Mammary epithelial cell (primary cell): ENCODE measurements at regions of chr3 and their contacts with region 1.

Region 1: DNA sequence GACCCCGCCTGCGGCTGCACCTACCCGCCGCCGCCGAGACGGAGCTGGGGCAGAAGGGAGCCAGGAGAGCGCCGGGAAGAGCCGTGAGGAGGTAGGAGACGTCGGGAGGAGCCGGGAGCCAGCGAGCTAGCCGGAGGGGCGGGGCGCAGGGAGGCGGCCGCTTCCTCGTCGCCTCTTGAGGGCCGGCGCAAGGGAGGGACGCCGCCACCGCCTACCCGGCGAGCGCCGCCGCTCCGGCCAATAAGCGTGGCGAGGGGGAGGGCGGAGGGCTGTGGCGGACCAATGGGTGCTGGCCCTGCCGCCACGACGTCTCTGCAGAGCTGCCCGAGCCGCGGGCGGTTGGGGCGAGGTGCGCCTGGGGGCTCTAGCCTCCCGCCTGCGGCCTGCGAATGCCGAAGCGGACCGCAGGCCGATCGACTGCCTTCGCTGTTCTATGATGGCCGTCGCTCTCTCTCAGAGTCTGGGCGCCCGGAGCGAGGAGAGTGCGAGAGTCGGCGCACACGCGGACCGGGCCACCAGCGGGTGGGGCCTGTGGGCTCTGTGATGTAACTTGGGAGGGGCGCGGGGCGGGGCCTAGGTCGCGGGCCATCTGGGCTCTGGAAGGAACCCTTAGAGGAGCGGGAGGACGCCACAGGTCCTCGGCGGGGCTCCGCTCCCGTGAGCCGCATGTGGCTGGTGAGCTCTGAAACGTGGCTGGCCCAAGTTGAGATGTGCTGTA is 72.7 kb upstream of the MAP4 start:
- DNase-seq: peak; percentile 98
- H3K4me3 ChIP-seq: peak overlapping the region; percentile 83 to 92 (median 90)
- H3K27ac ChIP-seq: peak overlapping the region; percentile 93
- H3K4me1 ChIP-seq: peaks cover 17% of the 10 kb centered on the region
- H3K27me3 ChIP-seq: no peaks in the 10 kb centered on the region
- CTCF ChIP-seq: peak in 1 of 2 donors; percentile 29

Region 2: DNA sequence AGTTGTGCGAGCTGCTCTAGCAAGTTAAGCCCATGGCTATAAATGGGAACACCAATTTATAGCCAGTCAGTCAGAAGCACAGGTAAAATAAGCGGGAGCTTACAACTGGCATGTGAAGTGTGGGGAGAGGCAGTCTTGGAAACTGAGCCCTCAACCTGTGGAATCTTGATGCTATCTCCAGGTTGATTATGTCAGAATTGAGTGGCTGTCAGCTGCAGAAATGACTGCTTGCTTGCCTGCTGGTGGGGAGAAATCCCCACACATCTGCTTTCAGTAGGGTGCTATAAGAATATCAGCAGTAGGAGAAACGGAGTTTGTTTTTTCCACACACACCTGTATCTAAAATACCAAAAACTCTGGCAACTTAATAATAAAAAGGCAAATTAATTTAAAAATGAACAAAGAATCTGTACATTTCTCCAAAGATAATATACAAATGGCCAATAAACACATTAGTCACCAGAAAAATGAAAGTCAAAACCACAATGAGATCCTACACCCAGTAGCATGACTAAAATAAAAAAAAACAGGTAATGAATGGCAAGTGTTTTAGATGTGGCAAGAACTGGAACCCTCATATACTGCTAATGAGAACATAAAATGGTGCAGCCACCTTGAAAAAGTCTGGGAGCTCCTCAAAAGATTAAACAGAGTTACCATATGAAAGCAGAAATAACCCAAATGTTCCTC is 46.7 kb before region 1 on chr3:
- CTCF ChIA-PET with region 1: no interaction called
- dilution Hi-C with region 1: no loop called
- in situ Hi-C with region 1: no loop called
- intact Hi-C with region 1: loop called (anchors 2 kb)
- DNase-seq: peak; percentile 67
- H3K4me3 ChIP-seq: no peak overlapping the region
- H3K27ac ChIP-seq: no peak overlapping the region
- H3K4me1 ChIP-seq: peaks cover 31% of the 10 kb centered on the region
- H3K27me3 ChIP-seq: no peaks in the 10 kb centered on the region
- CTCF ChIP-seq: no peak

Region 3: GRCh38 chr3:48119505-48120193 is 30.7 kb after region 1 on chr3:
- CTCF ChIA-PET with region 1: no interaction called
- dilution Hi-C with region 1: no loop called
- in situ Hi-C with region 1: no loop called
- intact Hi-C with region 1: loop called (anchors 5 kb)
- DNase-seq: no peak
- H3K4me3 ChIP-seq: no peak overlapping the region
- H3K27ac ChIP-seq: no peak overlapping the region
- H3K4me1 ChIP-seq: peaks cover under 1% of the 10 kb centered on the region
- H3K27me3 ChIP-seq: peaks cover 3% of the 10 kb centered on the region
- CTCF ChIP-seq: no peak

Region 4: GRCh38 chr3:48142316-48142870 is 53.5 kb after region 1 on chr3:
- CTCF ChIA-PET with region 1: no interaction called
- dilution Hi-C with region 1: no loop called
- in situ Hi-C with region 1: no loop called
- intact Hi-C with region 1: loop called (anchors 1 kb)
- DNase-seq: peak; percentile 90
- H3K4me3 ChIP-seq: no peak overlapping the region
- H3K27ac ChIP-seq: no peak overlapping the region
- H3K4me1 ChIP-seq: peaks cover 13% of the 10 kb centered on the region
- H3K27me3 ChIP-seq: no peaks in the 10 kb centered on the region
- CTCF ChIP-seq: no peak

Region 5: GRCh38 chr3:48151058-48151806 is 62.3 kb after region 1 on chr3:
- CTCF ChIA-PET with region 1: interaction called, 10 read pairs
- dilution Hi-C with region 1: no loop called
- in situ Hi-C with region 1: no loop called
- intact Hi-C with region 1: loop called (anchors 1 kb)
- DNase-seq: peak; percentile 66
- H3K4me3 ChIP-seq: no peak overlapping the region
- H3K27ac ChIP-seq: no peak overlapping the region
- H3K4me1 ChIP-seq: peaks cover 12% of the 10 kb centered on the region
- H3K27me3 ChIP-seq: no peaks in the 10 kb centered on the region
- CTCF ChIP-seq: peak; percentile 90 to 96